H1 (cell line): ENCODE measurements at regions of chr5 and their contacts with region 1.

Region 1: GRCh38 chr5:119411935-119412602 is 40.2 kb upstream of the HSD17B4 start:
- DNase-seq: peak in 1 of 2 experiments; percentile 65
- H3K4me3 ChIP-seq: peak overlapping the region; percentile 43 to 70 (median 56); a peak in 7 of 8 replicates
- H3K27ac ChIP-seq: no peak overlapping the region
- H3K4me1 ChIP-seq: no peaks in the 10 kb centered on the region
- H3K27me3 ChIP-seq: no peaks in the 10 kb centered on the region
- CTCF ChIP-seq: peak; percentile 36 to 88 (median 66); a peak in 3 of 4 replicates
- EP300 ChIP-seq: no peak
- POLR2A ChIP-seq: no peak; a peak in 1 of 3 replicates
- RAD21 ChIP-seq: peak; percentile 89 to 91

Region 2: GRCh38 chr5:119022017-119022745 is 389.9 kb before region 1 on chr5:
- CTCF ChIA-PET with region 1: interaction called, 46 read pairs
- POLR2A ChIA-PET with region 1: no interaction called
- DNase-seq: no peak
- H3K4me3 ChIP-seq: no peak overlapping the region
- H3K27ac ChIP-seq: no peak overlapping the region
- H3K4me1 ChIP-seq: no peaks in the 10 kb centered on the region
- H3K27me3 ChIP-seq: no peaks in the 10 kb centered on the region
- CTCF ChIP-seq: peak in 2 of 3 experiments; percentile 46 to 49; a peak in 2 of 4 replicates
- EP300 ChIP-seq: no peak
- POLR2A ChIP-seq: no peak
- RAD21 ChIP-seq: peak; percentile 85 to 86

Region 3: GRCh38 chr5:119255571-119256356 is 156.3 kb before region 1 on chr5:
- CTCF ChIA-PET with region 1: interaction called, 24 read pairs
- POLR2A ChIA-PET with region 1: interaction called, 3 read pairs
- DNase-seq: peak; percentile 64 to 74
- H3K4me3 ChIP-seq: no peak overlapping the region
- H3K27ac ChIP-seq: no peak overlapping the region; the same call in 1 of the 2 replicates
- H3K4me1 ChIP-seq: no peaks in the 10 kb centered on the region
- H3K27me3 ChIP-seq: no peaks in the 10 kb centered on the region
- CTCF ChIP-seq: peak; percentile 5 to 79 (median 70)
- EP300 ChIP-seq: no peak
- POLR2A ChIP-seq: no peak
- RAD21 ChIP-seq: peak; percentile 79 to 81

Region 4: DNA sequence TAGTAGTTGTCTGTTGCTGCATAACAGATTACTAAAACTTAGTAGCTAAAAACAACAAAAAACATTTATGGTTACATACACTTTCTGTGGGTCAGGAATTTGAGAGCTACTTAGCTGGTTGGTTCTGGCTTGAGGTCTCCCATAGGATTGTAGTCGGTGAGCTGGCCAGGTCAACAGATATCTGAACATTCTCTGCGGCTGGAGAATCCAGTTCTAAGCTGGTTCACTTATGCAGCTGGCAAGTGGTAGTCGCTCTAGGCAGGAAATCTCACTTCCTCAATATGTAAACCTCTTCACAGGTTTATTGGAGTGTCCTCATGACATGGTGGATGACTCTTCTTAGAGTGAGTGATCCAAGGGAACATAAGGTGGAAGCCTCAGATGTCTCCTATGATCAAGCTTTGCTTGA is 121.9 kb before region 1 on chr5:
- CTCF ChIA-PET with region 1: interaction called, 10 read pairs
- POLR2A ChIA-PET with region 1: no interaction called
- DNase-seq: no peak
- H3K4me3 ChIP-seq: no peak overlapping the region
- H3K27ac ChIP-seq: no peak overlapping the region
- H3K4me1 ChIP-seq: peaks cover 0 to 8% (median 4%) of the 10 kb centered on the region in 4 experiments; a peak in 4 of 7 replicates
- H3K27me3 ChIP-seq: no peaks in the 10 kb centered on the region
- CTCF ChIP-seq: no peak
- EP300 ChIP-seq: no peak
- POLR2A ChIP-seq: no peak
- RAD21 ChIP-seq: no peak

Region 5: DNA sequence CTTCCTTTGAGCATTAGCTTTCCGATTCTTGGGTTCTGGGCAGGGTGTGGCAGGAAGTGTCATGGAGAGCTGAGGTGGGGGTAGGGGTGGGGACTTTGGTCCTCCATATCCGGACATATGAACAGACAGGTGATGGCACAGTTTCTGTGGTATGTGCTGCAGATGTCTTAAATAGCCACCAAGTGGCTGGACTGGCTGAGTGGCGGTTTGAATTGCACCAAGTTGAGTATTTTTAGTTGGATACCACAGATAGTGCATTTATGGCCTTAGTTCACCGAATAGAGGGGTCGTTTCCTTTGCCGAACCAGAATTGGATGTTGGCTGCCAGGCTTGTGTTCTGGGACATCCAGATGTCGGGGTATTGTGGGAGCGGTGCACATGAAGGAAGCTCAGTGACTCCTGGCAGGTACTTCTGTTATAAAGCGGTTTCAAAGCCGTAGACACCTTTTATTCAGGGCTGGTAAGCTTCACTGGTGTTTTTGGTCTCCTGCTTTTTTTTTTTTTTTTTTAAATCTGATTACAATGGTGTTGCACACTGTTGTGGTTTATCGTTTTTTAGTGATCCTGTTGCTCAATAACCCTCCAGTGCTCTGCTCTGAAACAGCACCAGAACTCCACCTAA is 71.4 kb before region 1 on chr5:
- CTCF ChIA-PET with region 1: interaction called, 12 read pairs
- POLR2A ChIA-PET with region 1: no interaction called
- DNase-seq: no peak
- H3K4me3 ChIP-seq: no peak overlapping the region
- H3K27ac ChIP-seq: no peak overlapping the region
- H3K4me1 ChIP-seq: no peaks in the 10 kb centered on the region; a peak in 3 of 7 replicates
- H3K27me3 ChIP-seq: no peaks in the 10 kb centered on the region
- CTCF ChIP-seq: no peak
- EP300 ChIP-seq: no peak
- POLR2A ChIP-seq: no peak
- RAD21 ChIP-seq: no peak

Region 6: GRCh38 chr5:119360905-119361593 is 51.0 kb before region 1 on chr5:
- CTCF ChIA-PET with region 1: interaction called, 16 read pairs
- POLR2A ChIA-PET with region 1: interaction called, 3 read pairs
- DNase-seq: no peak
- H3K4me3 ChIP-seq: no peak overlapping the region
- H3K27ac ChIP-seq: no peak overlapping the region
- H3K4me1 ChIP-seq: peaks cover 2 to 10% (median 7%) of the 10 kb centered on the region in 4 experiments; a peak in 5 of 7 replicates
- H3K27me3 ChIP-seq: 0 out of 7 replicates have a peak, but pooled peaks cover 0 to 3% (median 1%) of the 10 kb centered on the region in 4 experiments
- CTCF ChIP-seq: no peak
- EP300 ChIP-seq: no peak
- POLR2A ChIP-seq: no peak
- RAD21 ChIP-seq: no peak

Region 7: DNA sequence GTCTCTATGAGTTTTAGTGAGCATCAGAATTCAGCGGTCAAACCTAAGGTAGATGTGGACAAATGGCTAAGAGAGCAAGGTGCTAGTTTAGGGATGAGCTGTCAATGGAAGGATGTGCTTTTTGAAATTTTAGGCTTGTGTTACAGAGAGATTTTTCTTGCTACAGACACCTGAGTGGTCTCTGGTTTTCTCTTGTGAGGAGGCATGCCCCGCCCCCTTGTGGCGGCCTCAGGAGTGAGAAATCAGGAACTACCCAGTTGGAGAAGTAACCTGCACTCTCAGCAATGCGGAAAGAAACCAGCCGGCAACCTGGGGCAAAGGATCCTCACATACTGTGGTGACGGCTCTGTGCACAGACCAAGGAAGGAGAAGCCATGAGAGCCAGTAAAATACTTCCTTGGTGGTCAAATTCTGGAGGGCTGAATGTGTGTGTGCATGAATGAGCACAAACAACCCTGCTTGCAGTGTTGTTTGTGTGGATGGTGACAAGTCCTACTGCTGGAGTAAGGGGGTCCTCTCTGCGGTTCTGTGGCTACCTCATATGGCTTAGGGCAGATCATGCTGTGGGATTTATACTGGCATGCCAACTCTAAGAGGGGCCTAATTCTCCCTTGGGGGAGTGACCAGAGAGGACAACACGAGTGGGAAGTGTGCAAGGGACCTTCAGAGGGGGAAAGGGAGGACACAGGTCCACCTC is 23.5 kb after region 1 on chr5:
- CTCF ChIA-PET with region 1: interaction called, 26 read pairs
- POLR2A ChIA-PET with region 1: no interaction called
- DNase-seq: peak in 1 of 2 experiments; percentile 87
- H3K4me3 ChIP-seq: no peak overlapping the region
- H3K27ac ChIP-seq: no peak overlapping the region
- H3K4me1 ChIP-seq: 0 out of 7 replicates have a peak, but pooled peaks cover 0 to 2% (median 0%) of the 10 kb centered on the region in 4 experiments
- H3K27me3 ChIP-seq: no peaks in the 10 kb centered on the region
- CTCF ChIP-seq: peak; percentile 64 to 72 (median 65)
- EP300 ChIP-seq: no peak
- POLR2A ChIP-seq: no peak
- RAD21 ChIP-seq: peak; percentile 71 to 76